ENCODE measurements at regions of chr4 and their contacts with region 1.

Region 1: GRCh38 chr4:3502941-3503936 is 29.0 kb downstream of the LRPAP1 start:
- DNase-seq: no peak
- ATAC-seq: no peak
- H3K4me3 ChIP-seq: no peak overlapping the region
- H3K27ac ChIP-seq: no peak overlapping the region
- H3K4me1 ChIP-seq: no peaks in the 10 kb centered on the region
- CTCF ChIP-seq: no peak
- EP300 ChIP-seq: no peak
- POLR2A ChIP-seq: no peak
- RAD21 ChIP-seq: no peak

Region 2: DNA sequence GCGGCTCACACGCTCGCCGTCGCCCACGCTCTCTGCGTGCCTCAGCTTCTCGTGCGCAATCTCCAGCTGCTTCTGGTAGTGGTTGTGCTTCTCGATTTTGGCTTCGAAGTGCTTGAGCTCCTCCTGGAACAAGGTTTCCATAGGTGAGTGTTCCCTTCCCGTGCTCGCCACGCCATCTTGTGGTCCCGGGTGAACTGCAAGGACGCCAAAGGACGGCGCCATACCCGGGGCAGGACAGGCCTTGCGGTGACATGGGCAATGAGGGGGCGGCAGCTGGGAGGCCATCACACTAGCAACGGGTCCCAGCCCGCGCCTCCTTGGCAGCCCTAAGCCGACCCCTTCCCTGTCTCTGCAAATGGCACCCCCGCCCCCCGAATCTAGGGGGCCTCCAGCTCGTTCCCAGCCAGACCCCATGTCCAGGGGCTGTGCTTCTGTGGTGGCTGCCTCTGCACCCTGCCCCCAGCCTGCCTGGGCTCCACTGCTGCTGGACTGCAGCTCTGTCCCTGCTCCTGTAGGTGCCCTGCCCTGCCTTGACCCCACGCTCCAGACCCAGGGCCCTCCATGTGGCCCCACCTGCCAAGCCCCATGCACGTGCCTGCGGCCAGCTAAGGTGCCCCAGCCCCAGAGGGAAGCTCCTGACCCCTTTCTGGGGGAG is 11.7 kb after region 1 on chr4:
- CTCF ChIA-PET with region 1: interaction called, 25 read pairs
- POLR2A ChIA-PET with region 1: no interaction called
- DNase-seq: peak in 1 of 2 experiments; percentile 20
- ATAC-seq: peak; percentile 68 to 78; a peak in 5 of 6 replicates
- H3K4me3 ChIP-seq: no peak overlapping the region
- H3K27ac ChIP-seq: no peak overlapping the region
- H3K4me1 ChIP-seq: no peaks in the 10 kb centered on the region
- CTCF ChIP-seq: peak; percentile 11; the same call in 1 of the 3 replicates
- EP300 ChIP-seq: no peak
- POLR2A ChIP-seq: no peak
- RAD21 ChIP-seq: no peak

Measured in A549 (cell line).